GM13976 (cell line): ENCODE measurements at regions of chr16 and their contacts with region 1.

Region 1: DNA sequence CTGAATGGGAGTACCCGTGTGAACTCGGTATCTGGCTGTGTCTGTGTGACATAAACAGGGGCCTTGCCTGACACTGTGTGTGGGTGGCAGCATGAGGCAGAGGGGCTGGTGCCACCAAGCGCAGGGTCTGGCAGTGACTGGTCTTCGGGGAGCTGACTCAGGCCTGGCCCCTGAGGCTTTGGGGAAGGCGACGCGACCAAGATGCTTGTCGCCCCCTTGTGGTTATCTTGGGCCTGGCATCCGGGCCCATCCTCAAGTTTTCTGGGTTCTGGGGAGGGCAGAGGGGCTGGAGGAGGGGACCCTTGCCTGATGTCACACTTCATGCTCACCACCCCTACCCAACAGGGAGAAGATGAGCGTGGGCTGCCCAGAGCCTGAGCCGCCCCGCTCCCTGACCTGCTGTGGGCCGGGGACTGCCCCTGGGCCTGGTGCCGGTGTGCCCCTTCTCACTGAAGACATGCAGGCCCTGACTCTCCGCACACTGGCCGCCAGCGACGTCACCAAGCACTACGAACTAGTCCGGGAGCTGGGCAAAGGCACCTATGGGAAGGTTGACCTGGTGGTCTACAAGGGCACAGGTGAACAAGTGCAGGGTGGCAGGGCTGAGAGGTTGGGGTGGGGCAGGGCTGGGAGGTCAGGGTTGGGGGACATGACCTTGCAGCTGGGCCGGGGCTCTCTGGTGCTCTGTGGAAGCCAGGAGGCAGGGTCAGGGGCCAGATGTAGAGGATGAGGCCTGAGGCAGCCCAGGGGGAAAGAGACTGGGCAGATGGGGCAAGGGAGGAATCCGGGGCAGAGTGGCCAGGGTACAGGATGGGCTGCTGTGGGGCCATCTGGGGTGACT is 24.9 kb downstream of the SBK1 start:
- DNase-seq: peak; percentile 87
- CTCF ChIP-seq: peak; percentile 84

Region 2: DNA sequence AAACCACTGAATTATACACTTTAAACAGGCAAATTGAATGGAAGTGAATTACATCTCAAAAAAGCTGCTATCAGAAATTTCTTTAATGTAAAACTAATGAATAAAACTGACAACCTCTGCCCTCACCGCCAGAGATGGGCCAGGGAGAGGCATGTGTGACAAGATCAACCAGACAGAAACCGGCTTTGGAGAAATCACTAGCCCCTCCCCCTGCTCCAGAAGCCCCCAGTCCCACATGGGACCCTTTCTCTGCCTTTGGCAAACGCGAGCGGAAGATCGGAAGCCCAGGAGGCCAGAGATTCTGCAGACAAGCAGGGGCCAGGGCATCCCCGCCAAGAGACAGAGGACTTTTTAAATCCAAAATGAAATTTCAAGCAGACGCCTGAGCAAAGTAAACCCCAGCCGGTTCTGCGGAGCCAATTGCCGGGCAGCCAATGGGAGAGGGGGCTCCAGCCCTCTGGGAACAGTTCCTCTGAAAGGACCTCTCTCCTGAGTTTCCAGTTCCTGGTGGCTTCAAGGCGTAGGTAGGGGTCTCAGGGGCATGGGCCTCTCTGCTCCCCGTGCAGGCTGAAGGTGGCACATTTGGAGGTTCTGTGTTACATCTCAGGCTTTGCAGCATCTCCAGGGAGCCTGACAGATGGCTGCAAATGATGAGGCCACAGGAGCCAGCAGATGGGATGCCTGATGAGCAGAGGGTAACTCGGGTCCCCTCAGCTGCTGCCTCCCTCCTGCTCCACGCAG is 371.9 kb before region 1 on chr16:
- in situ Hi-C with region 1: no loop called
- DNase-seq: no peak
- CTCF ChIP-seq: no peak

Region 3: GRCh38 chr16:28110479-28110878 is 206.8 kb before region 1 on chr16:
- in situ Hi-C with region 1: no loop called
- DNase-seq: no peak
- CTCF ChIP-seq: no peak

Region 4: DNA sequence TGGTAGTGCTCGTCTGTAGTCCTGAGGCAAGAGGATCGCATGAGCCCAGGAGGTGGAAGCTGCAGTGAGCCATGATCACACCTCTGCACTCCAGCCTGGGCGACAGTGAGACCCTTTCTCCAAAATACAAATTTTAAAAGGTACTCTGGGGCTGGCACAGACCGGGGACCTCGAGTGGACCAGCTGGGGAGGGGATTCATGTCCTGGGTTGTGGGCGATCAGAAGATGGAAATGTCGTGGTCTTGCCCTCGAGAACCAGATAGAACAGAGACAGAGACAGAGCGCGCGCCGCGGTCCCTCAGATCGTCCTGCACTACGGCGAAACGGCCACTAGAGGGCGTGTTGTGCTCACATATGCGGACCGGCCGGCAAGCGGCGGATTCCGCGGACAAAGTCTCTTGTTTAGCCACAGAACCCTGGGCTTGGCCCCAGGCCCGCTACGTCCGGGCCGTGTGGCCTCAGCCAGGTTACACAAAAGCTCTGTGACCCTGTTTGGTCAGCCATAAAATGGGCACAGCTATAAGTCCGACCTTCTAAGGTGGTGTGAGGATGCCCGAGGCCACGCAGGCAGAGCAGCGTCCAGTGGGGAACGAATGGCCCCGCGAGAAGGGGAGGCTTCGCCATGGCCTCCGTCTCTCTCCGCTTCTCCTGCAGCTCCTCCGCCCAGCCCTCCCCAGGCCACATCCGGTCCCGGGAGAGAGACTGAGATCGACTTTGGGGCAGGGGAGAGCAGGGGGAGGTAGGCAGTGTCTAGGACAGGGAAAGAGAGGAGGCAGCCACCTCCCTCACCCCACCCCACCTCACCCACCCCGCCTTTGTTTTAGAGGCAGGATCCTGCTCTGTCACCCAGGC is 39.5 kb before region 1 on chr16:
- in situ Hi-C with region 1: loop called (anchors 5 kb)
- DNase-seq: peak; percentile 90
- CTCF ChIP-seq: peak; percentile 98